Activated CD4-positive, alpha-beta T cell treated with anti-CD3 and anti-CD28 coated beads for 36 hours (primary cell): ENCODE measurements at regions of chrX and their contacts with region 1.

Region 1: GRCh38 chrX:53317365-53318069 is 36.1 kb upstream of the IQSEC2 start:
- DNase-seq: peak; percentile 78
- ATAC-seq: peak; percentile 89
- H3K4me3 Mint-ChIP-seq: no peak overlapping the region
- H3K27ac Mint-ChIP-seq: no peak overlapping the region
- H3K4me1 Mint-ChIP-seq: peaks cover 10% of the 10 kb centered on the region
- H3K27me3 Mint-ChIP-seq: peaks cover 28% of the 10 kb centered on the region

Region 2: GRCh38 chrX:52556741-52557140 is 760.8 kb before region 1 on chrX:
- CTCF ChIA-PET with region 1: no interaction called
- POLR2A ChIA-PET with region 1: no interaction called
- intact Hi-C with region 1: no loop called
- DNase-seq: peak; percentile 5
- ATAC-seq: peak; percentile 83
- H3K4me3 Mint-ChIP-seq: no peak overlapping the region
- H3K27ac Mint-ChIP-seq: no peak overlapping the region
- H3K4me1 Mint-ChIP-seq: peaks cover 5% of the 10 kb centered on the region
- H3K27me3 Mint-ChIP-seq: no peaks in the 10 kb centered on the region

Region 3: GRCh38 chrX:53284684-53285447 is 32.7 kb before region 1 on chrX:
- CTCF ChIA-PET with region 1: interaction called, 10 read pairs
- POLR2A ChIA-PET with region 1: no interaction called
- intact Hi-C with region 1: no loop called
- DNase-seq: peak; percentile 62
- ATAC-seq: peak; percentile 65
- H3K4me3 Mint-ChIP-seq: no peak overlapping the region
- H3K27ac Mint-ChIP-seq: no peak overlapping the region
- H3K4me1 Mint-ChIP-seq: peaks cover 27% of the 10 kb centered on the region
- H3K27me3 Mint-ChIP-seq: no peaks in the 10 kb centered on the region

Region 4: GRCh38 chrX:53330331-53330730 is 12.8 kb after region 1 on chrX:
- CTCF ChIA-PET with region 1: interaction called, 32 read pairs
- POLR2A ChIA-PET with region 1: no interaction called
- intact Hi-C with region 1: no loop called
- DNase-seq: no peak
- ATAC-seq: no peak
- H3K4me3 Mint-ChIP-seq: no peak overlapping the region
- H3K27ac Mint-ChIP-seq: no peak overlapping the region
- H3K4me1 Mint-ChIP-seq: no peaks in the 10 kb centered on the region
- H3K27me3 Mint-ChIP-seq: peaks cover 12% of the 10 kb centered on the region

Region 5: GRCh38 chrX:53445977-53446376 is 128.5 kb after region 1 on chrX:
- CTCF ChIA-PET with region 1: interaction called, 52 read pairs
- POLR2A ChIA-PET with region 1: no interaction called
- intact Hi-C with region 1: loop called (anchors 1 kb)
- DNase-seq: peak; percentile 70
- ATAC-seq: peak; percentile 45
- H3K4me3 Mint-ChIP-seq: no peak overlapping the region
- H3K27ac Mint-ChIP-seq: no peak overlapping the region
- H3K4me1 Mint-ChIP-seq: peaks cover 4% of the 10 kb centered on the region
- H3K27me3 Mint-ChIP-seq: no peaks in the 10 kb centered on the region

Region 6: DNA sequence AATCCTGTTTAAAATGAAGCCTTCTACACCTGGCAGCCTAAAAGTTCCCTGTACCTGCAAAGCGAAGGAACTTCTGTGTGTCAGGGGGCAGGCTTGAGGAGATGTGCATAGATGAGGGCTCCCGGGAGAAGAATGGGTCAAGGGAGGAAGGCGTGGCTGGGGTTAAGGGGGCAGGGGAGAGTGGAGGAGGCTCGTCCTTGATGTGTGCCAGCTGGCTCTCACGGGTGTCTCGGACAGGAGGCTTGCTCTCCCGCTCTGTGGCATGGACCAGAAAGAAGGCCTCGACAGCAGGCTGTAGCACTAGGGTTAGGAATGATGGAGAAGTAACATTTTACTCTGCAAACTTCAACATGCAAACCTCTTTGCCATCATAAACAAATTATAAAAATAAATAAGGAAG is 221.3 kb after region 1 on chrX:
- CTCF ChIA-PET with region 1: no interaction called
- POLR2A ChIA-PET with region 1: no interaction called
- intact Hi-C with region 1: loop called in 1 of 2 experiments (anchors 5 kb)
- DNase-seq: no peak
- ATAC-seq: no peak
- H3K4me3 Mint-ChIP-seq: no peak overlapping the region
- H3K27ac Mint-ChIP-seq: no peak overlapping the region
- H3K4me1 Mint-ChIP-seq: no peaks in the 10 kb centered on the region
- H3K27me3 Mint-ChIP-seq: no peaks in the 10 kb centered on the region